ENCODE measurements at regions of chr7 and their contacts with region 1.

Region 1: GRCh38 chr7:117312598-117313580 is 10.0 kb downstream of the WNT2 start:
- DNase-seq: no peak
- H3K4me3 ChIP-seq: no peak overlapping the region
- H3K27ac ChIP-seq: no peak overlapping the region
- H3K4me1 ChIP-seq: peaks cover 0 to 2% (median 0%) of the 10 kb centered on the region in 4 experiments; a peak in 1 of 7 replicates
- H3K27me3 ChIP-seq: peaks cover 0 to 2% (median 0%) of the 10 kb centered on the region in 4 experiments; a peak in 1 of 7 replicates
- CTCF ChIP-seq: no peak; a peak in 1 of 4 replicates
- EP300 ChIP-seq: no peak
- POLR2A ChIP-seq: no peak
- RAD21 ChIP-seq: no peak

Region 2: DNA sequence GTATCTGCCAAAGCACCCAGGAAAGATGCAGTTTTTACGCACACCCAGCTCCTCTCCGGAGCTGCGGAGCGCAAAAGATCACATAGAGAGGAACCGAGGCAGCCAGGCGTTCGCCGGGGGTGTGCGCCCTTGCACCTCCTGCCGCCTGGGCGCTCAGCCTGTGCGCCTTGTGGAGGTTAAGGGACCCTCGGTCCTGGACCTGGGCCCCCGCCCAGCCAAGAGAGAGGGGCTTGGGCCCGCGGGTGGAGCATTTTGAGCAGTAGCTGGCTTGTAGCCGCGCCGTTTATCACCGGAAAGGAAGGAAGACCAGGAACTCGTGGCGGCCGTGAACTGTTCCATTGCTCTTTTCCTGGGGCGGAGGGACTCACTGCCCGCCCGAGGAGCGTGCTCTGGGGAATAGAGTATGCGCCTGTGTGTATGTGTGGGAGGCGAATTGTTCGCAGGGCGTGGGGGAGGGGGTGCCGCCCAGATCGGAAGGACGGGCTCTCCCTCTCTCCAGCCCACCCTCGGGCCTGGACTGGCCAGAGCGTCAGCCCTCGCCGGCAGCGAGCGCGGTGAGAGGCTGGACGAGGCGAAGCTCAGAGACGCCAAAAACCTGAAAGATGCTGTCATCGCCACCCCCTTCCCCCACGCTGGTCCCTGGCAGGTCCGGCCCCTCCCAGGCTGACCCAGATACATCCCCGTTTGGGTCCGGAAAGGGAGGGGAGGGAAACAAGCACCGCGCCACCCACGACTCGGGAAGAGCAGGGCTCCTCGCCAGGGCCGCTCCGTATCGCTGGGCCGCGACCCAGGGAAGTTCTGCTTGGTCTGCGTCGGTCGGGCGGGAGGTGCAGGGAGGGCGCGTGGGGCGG is 11.2 kb after region 1 on chr7:
- CTCF ChIA-PET with region 1: interaction called, 14 read pairs
- POLR2A ChIA-PET with region 1: no interaction called
- DNase-seq: peak in 1 of 2 experiments; percentile 72
- H3K4me3 ChIP-seq: peak overlapping the region; percentile 32 to 70 (median 45)
- H3K27ac ChIP-seq: no peak overlapping the region
- H3K4me1 ChIP-seq: peaks cover 0 to 16% (median 4%) of the 10 kb centered on the region in 4 experiments; a peak in 3 of 7 replicates
- H3K27me3 ChIP-seq: peaks cover 51 to 73% (median 69%) of the 10 kb centered on the region in 4 experiments
- CTCF ChIP-seq: no peak
- EP300 ChIP-seq: no peak
- POLR2A ChIP-seq: no peak
- RAD21 ChIP-seq: no peak